CD14-positive monocyte (primary cell): ENCODE measurements at regions of chr15 and their contacts with region 1.

Region 1: DNA sequence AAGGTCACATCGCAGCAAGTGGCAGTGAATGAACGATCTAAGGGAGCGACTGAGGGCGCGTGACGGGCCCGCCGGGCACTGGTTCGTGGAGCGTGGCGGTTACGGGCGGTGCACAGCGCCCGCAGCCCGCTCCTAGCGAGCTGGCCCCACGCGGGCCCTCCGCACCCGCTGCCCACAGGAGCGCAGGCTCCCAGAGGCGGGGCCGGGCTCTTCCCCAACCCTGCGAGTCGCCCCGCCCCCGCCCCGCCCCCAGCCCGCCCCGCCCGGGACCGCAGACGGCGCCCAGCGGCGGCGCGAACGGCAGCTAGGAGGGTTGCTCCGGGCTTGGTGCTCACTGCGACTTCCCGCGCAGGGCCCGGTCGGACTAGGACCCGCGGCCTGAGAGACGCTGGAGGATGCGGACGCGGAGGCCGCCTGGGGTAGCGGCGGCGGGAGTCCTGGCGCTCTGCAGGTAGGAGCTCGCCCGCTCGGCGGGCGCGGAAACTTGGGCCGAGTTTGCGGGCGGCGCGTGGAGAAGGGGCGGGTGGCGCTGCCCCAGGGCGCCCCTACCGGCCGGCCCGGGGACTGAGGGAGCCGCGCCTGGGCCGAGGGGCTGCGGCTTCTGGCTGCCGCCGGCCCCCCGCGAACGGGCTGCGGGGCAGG is at the start of gene C15orf39:
- DNase-seq: peak; percentile 80 to 88 (median 82)
- H3K4me3 ChIP-seq: peak within 1 kb of the TSS; percentile 95 to 97 (median 97)
- H3K4me3 Mint-ChIP-seq: peak within 1 kb of the TSS; percentile 94 to 96
- H3K27ac ChIP-seq: peak within 1 kb of the TSS; percentile 82 to 97
- H3K27ac Mint-ChIP-seq: peak within 1 kb of the TSS; percentile 89 to 96 (median 93)
- H3K4me1 ChIP-seq: peaks cover 59 to 74% of the 10 kb centered on the region in 2 donors
- H3K4me1 Mint-ChIP-seq: peaks cover 61% of the 10 kb centered on the region
- H3K27me3 ChIP-seq: no peaks in the 10 kb centered on the region
- H3K27me3 Mint-ChIP-seq: peaks cover 3 to 7% (median 4%) of the 10 kb centered on the region in 3 donors
- CTCF ChIP-seq: peak; percentile 99
- polyA plus RNA-seq, gene C15orf39: 8.9 to 80.7 (median 18.2) TPM

Region 2: DNA sequence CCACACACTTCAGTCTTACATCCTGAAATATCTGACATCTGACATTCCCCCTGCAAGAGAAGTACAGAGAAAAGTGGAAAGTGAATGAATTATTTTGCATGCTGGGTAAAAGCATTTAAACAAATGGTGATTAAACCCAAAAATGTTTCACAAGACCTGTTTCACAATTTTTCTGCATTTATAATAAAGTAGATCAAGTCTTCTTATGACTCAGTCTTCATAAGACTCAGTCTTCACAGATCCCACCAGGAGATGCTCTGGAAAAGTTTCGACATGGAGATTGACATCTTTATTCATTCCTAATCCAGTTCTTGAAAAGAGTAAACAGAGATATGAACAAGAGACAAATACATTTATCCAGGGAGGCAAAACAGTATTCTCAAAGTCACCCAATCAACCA is 492.7 kb before region 1 on chr15:
- intact Hi-C with region 1: no loop called
- DNase-seq: peak; percentile 27 to 82 (median 73)
- H3K4me3 ChIP-seq: peak overlapping the region in 1 of 3 experiments; percentile 11
- H3K4me3 Mint-ChIP-seq: peak overlapping the region in 1 of 2 donors; percentile 40
- H3K27ac ChIP-seq: peak overlapping the region in 1 of 2 donors; percentile 75
- H3K27ac Mint-ChIP-seq: peak overlapping the region in 5 of 7 donors; percentile 27 to 91 (median 75)
- H3K4me1 ChIP-seq: peaks cover 53 to 63% of the 10 kb centered on the region in 2 donors
- H3K4me1 Mint-ChIP-seq: peaks cover 61% of the 10 kb centered on the region
- H3K27me3 ChIP-seq: peaks cover 0 to 2% of the 10 kb centered on the region in 2 donors
- H3K27me3 Mint-ChIP-seq: peaks cover 2 to 4% (median 3%) of the 10 kb centered on the region in 3 donors
- CTCF ChIP-seq: no peak

Region 3: GRCh38 chr15:74956648-74957300 is 245.0 kb before region 1 on chr15 and contains the start of gene RPP25:
- intact Hi-C with region 1: loop called in 1 of 2 experiments (anchors 2 kb)
- DNase-seq: peak; percentile 32 to 62 (median 51)
- H3K4me3 ChIP-seq: peak within 1 kb of the TSS; percentile 33 to 83 (median 50)
- H3K4me3 Mint-ChIP-seq: peak within 1 kb of the TSS; percentile 77 to 86
- H3K27ac ChIP-seq: no peak within 1 kb of the TSS
- H3K27ac Mint-ChIP-seq: peak within 1 kb of the TSS in 2 of 7 donors; percentile 35 to 66
- H3K4me1 ChIP-seq: peaks cover 40 to 50% of the 10 kb centered on the region in 2 donors
- H3K4me1 Mint-ChIP-seq: peaks cover 42% of the 10 kb centered on the region
- H3K27me3 ChIP-seq: peaks cover 41 to 54% of the 10 kb centered on the region in 2 donors
- H3K27me3 Mint-ChIP-seq: peaks cover 53 to 64% (median 64%) of the 10 kb centered on the region in 3 donors
- CTCF ChIP-seq: no peak
- polyA plus RNA-seq, gene RPP25: 1.7 to 6.7 (median 6.5) TPM

Region 4: DNA sequence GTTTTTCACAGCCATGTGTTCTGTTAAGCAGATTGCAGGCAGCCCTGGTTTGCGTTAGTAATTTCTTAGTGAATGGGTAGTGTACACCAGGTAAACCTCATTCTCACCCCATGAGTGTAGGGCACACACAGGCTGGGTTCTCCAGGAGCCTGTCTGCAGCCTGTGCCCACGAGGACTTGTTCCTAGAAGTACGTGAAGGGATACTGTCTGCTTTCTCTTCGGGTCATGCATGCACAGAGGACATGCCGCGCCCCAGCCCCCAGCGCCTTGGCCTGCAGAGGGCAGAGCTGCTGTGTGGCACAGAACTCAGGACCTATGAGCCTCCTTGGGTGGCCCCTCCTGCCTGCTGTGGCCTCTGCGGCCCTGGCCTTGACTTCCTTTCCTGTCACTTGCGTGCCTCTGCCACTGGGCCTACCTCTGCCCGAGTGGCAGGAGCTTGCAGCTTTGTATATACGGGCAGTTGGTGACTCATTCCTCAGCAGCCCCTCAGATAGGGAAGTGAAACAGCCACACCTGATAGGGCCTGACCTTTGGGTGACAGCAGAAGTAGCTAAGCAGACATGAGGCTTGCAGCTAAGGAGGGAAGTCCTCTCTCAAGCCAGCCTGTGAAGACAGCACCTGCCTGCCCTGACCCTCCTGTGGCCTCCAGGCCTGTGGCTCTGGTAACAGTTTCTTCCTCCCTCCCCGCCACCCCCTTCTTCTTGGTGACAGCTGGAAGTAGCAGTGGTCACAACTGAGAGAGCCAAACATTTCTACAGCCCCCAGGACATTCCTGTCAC is 158.8 kb before region 1 on chr15:
- intact Hi-C with region 1: loop called (anchors 1 to 2 kb)
- DNase-seq: peak; percentile 99 to 100 (median 99)
- H3K4me3 ChIP-seq: peak overlapping the region in 1 of 3 experiments; percentile 65
- H3K4me3 Mint-ChIP-seq: peak overlapping the region; percentile 75 to 78
- H3K27ac ChIP-seq: peak overlapping the region; percentile 98 to 100
- H3K27ac Mint-ChIP-seq: peak overlapping the region; percentile 98 to 100 (median 99)
- H3K4me1 ChIP-seq: peaks cover 85 to 98% of the 10 kb centered on the region in 2 donors
- H3K4me1 Mint-ChIP-seq: peaks cover 95% of the 10 kb centered on the region
- H3K27me3 ChIP-seq: no peaks in the 10 kb centered on the region
- H3K27me3 Mint-ChIP-seq: peaks cover 0 to 4% (median 2%) of the 10 kb centered on the region in 3 donors
- CTCF ChIP-seq: peak; percentile 78

Region 5: GRCh38 chr15:75061272-75061671 is 140.5 kb before region 1 on chr15:
- intact Hi-C with region 1: no loop called
- DNase-seq: peak; percentile 75 to 81 (median 76)
- H3K4me3 ChIP-seq: no peak overlapping the region
- H3K4me3 Mint-ChIP-seq: peak overlapping the region in 1 of 2 donors; percentile 7
- H3K27ac ChIP-seq: peak overlapping the region; percentile 58 to 74
- H3K27ac Mint-ChIP-seq: peak overlapping the region; percentile 77 to 93 (median 86)
- H3K4me1 ChIP-seq: peaks cover 57 to 64% of the 10 kb centered on the region in 2 donors
- H3K4me1 Mint-ChIP-seq: peaks cover 66% of the 10 kb centered on the region
- H3K27me3 ChIP-seq: no peaks in the 10 kb centered on the region
- H3K27me3 Mint-ChIP-seq: peaks cover 0 to 5% (median 0%) of the 10 kb centered on the region in 3 donors
- CTCF ChIP-seq: no peak

Region 6: DNA sequence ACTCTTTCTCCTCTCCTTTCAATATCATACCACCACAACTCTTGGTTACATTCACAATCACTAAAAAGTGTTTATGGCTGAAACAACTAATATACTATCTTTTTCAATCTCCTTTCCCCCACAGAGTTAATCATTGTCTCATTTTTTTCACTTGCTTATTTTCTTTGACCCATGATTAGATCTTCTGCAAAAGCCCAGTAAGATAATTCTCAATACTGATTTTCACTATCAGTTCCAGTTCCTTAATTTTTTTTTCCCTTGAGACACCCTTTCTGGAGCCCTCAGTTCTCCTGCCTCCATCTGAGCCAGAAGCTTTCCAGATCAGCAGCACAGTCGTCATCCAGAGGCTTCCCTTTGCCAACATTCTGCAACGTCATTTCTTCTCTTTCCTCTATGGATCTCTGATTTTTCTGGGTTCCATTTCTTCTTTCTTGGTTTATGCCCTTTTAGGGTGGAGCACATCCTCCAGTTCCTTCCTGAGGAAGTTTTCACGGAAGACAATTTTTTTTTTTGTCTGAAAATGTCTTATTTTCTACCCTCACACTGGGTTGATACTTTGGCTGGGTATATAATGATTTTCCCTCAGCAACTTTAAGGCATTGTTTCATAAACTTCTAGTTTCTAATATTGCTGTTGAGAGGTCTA is 88.8 kb before region 1 on chr15:
- intact Hi-C with region 1: loop called (anchors 5 kb)
- DNase-seq: peak; percentile 74 to 92 (median 89)
- H3K4me3 ChIP-seq: peak overlapping the region in 1 of 3 experiments; percentile 12
- H3K4me3 Mint-ChIP-seq: peak overlapping the region; percentile 38 to 71
- H3K27ac ChIP-seq: peak overlapping the region; percentile 87 to 96
- H3K27ac Mint-ChIP-seq: peak overlapping the region; percentile 94 to 99 (median 96)
- H3K4me1 ChIP-seq: peaks cover 63 to 64% of the 10 kb centered on the region in 2 donors
- H3K4me1 Mint-ChIP-seq: peaks cover 65% of the 10 kb centered on the region
- H3K27me3 ChIP-seq: no peaks in the 10 kb centered on the region
- H3K27me3 Mint-ChIP-seq: peaks cover 0 to 7% (median 0%) of the 10 kb centered on the region in 3 donors
- CTCF ChIP-seq: no peak

Region 7: GRCh38 chr15:75138016-75138999 is 63.4 kb before region 1 on chr15:
- intact Hi-C with region 1: loop called in 1 of 2 experiments (anchors 5 kb)
- DNase-seq: no peak
- H3K4me3 ChIP-seq: no peak overlapping the region
- H3K4me3 Mint-ChIP-seq: no peak overlapping the region
- H3K27ac ChIP-seq: no peak overlapping the region
- H3K27ac Mint-ChIP-seq: peak overlapping the region in 1 of 7 donors; percentile 14
- H3K4me1 ChIP-seq: peaks cover 21 to 37% of the 10 kb centered on the region in 2 donors
- H3K4me1 Mint-ChIP-seq: peaks cover 33% of the 10 kb centered on the region
- H3K27me3 ChIP-seq: no peaks in the 10 kb centered on the region
- H3K27me3 Mint-ChIP-seq: peaks cover 0 to 3% (median 1%) of the 10 kb centered on the region in 3 donors
- CTCF ChIP-seq: no peak

Region 8: DNA sequence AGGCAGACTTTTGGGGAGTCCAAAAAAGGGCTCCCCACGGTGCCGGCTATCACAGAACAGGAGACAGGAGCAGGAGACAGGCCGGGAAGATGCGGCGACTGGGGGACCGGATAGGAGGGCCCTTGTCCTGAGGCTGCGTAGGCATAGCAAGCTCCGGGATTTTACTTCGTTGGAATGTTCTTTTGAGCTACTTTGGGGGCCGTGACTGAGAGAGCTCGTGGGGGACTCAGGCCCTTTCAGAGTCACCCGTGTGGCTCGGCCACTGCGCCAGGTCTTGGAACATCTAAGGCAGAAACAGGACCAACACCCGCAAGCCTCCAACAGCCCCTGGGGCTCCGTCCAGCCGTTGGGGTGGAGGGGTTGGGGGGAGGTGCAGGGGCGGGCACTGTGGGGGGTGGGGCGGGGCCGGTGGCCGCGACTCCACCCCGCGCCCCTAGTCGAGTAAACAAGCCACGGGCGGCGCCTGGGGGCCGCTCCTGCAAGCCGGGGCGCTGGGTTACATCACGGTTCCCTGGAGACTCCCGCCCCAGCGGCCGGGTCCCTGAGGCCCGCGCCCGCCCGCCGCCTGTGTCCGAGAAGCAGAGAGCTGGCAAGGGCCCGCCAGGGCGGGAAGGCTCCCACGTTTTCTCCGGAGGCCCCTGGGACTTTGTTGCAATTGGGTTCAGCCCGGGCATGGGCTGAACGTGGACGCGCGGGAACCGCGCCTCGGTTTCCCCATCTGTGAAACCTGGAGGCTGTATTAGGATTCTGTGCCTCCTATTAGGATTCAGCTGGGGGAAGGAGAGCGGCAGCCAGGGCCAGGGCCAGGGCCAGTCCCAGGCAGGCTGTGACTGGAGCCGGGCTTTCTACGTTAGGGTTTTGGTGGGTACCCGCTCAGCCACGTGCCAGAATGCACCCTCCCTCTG is 23.3 kb before region 1 on chr15:
- intact Hi-C with region 1: loop called in 1 of 2 experiments (anchors 2 kb)
- DNase-seq: peak in 2 of 3 donors; percentile 38 to 41
- H3K4me3 ChIP-seq: peak overlapping the region; percentile 11 to 73 (median 41)
- H3K4me3 Mint-ChIP-seq: peak overlapping the region; percentile 69 to 91
- H3K27ac ChIP-seq: peak overlapping the region in 1 of 2 donors; percentile 35
- H3K27ac Mint-ChIP-seq: peak overlapping the region in 3 of 7 donors; percentile 25 to 70 (median 54)
- H3K4me1 ChIP-seq: peaks cover 67 to 74% of the 10 kb centered on the region in 2 donors
- H3K4me1 Mint-ChIP-seq: peaks cover 70% of the 10 kb centered on the region
- H3K27me3 ChIP-seq: peaks cover 0 to 22% of the 10 kb centered on the region in 2 donors
- H3K27me3 Mint-ChIP-seq: peaks cover 24 to 35% (median 29%) of the 10 kb centered on the region in 3 donors
- CTCF ChIP-seq: no peak